CD8-positive, alpha-beta T cell (primary cell): ENCODE measurements at regions of chr6 and their contacts with region 1.

Region 1: GRCh38 chr6:27157459-27158315 is 89.8 kb upstream of the PRSS16 start:
- DNase-seq: peak; percentile 72 to 91 (median 86)
- ATAC-seq: peak; percentile 75
- H3K4me3 ChIP-seq: peak overlapping the region; percentile 55 to 60
- H3K4me3 Mint-ChIP-seq: peak overlapping the region; percentile 85
- H3K27ac ChIP-seq: peak overlapping the region; percentile 18 to 23
- H3K27ac Mint-ChIP-seq: peak overlapping the region; percentile 87
- H3K4me1 ChIP-seq: peaks cover 13% of the 10 kb centered on the region
- H3K4me1 Mint-ChIP-seq: peaks cover 38% of the 10 kb centered on the region
- H3K27me3 ChIP-seq: no peaks in the 10 kb centered on the region
- H3K27me3 Mint-ChIP-seq: no peaks in the 10 kb centered on the region
- CTCF ChIP-seq: peak; percentile 48

Region 2: GRCh38 chr6:27126815-27127537 is 30.7 kb before region 1 on chr6:
- CTCF ChIA-PET with region 1: interaction called, 49 read pairs
- POLR2A ChIA-PET with region 1: interaction called, 32 read pairs
- intact Hi-C with region 1: loop called (anchors 1 kb)
- DNase-seq: peak; percentile 62 to 94 (median 81)
- ATAC-seq: peak; percentile 75
- H3K4me3 ChIP-seq: peak overlapping the region; percentile 24 to 31
- H3K4me3 Mint-ChIP-seq: peak overlapping the region; percentile 71
- H3K27ac ChIP-seq: peak overlapping the region in 1 of 2 experiments; percentile 52
- H3K27ac Mint-ChIP-seq: peak overlapping the region; percentile 77
- H3K4me1 ChIP-seq: peaks cover 14% of the 10 kb centered on the region
- H3K4me1 Mint-ChIP-seq: peaks cover 16% of the 10 kb centered on the region
- H3K27me3 ChIP-seq: no peaks in the 10 kb centered on the region
- H3K27me3 Mint-ChIP-seq: no peaks in the 10 kb centered on the region
- CTCF ChIP-seq: peak; percentile 95

Region 3: DNA sequence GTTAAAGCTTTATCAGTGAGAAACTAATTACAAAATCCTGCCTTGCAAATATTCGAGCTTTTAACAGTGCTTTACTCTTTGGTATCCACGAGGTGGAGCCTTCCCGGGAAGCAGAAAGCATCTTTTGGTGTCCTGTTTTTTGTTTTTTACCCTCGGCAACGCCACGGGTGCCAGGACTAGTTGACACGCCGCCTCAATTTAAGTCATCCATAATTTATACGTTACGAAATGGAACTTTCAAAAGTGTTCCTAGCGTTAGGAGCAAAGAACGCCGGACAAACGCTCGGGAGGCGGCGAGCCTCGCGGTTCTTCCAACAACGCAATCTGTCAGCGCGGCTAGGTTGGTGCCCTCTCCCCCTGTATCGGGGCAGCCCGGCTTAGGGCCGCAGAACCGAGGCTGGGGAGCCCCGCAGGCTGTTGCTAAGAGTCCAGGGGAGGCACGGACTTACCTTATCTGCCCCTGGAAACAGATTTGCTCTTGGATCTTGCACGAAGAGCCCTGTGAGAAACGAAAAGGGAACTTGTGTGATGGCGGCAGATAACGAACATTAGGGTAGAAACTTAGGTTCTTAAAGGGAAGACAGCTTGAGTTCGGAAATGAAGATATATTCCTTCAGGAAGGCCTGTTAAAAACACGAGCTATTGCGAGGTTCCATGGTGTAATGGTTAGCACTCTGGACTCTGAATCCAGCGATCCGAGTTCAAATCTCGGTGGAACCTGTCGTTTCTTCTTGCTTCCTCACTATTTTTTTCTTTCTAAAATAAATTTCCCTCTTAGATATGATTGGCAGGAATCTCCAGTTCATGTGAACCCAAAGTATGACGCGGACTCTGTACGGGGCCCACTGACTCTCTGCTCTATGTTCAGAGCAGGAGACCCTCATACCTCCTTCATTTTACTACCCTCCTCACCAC is 361.5 kb after region 1 on chr6:
- CTCF ChIA-PET with region 1: interaction called, 6 read pairs
- POLR2A ChIA-PET with region 1: no interaction called
- intact Hi-C with region 1: loop called in 1 of 2 experiments (anchors 5 kb)
- DNase-seq: peak; percentile 29 to 88 (median 61)
- ATAC-seq: peak; percentile 78
- H3K4me3 ChIP-seq: peak overlapping the region; percentile 74 to 88
- H3K4me3 Mint-ChIP-seq: peak overlapping the region; percentile 83
- H3K27ac ChIP-seq: peak overlapping the region; percentile 59 to 72
- H3K27ac Mint-ChIP-seq: peak overlapping the region; percentile 83
- H3K4me1 ChIP-seq: peaks cover 10% of the 10 kb centered on the region
- H3K4me1 Mint-ChIP-seq: peaks cover 19% of the 10 kb centered on the region
- H3K27me3 ChIP-seq: peaks cover 0 to 9% of the 10 kb centered on the region in 2 experiments
- H3K27me3 Mint-ChIP-seq: peaks cover 18% of the 10 kb centered on the region
- CTCF ChIP-seq: peak; percentile 77

Region 4: GRCh38 chr6:28355743-28356665 is 1198.3 kb after region 1 on chr6:
- CTCF ChIA-PET with region 1: interaction called, 4 read pairs
- POLR2A ChIA-PET with region 1: no interaction called
- intact Hi-C with region 1: loop called (anchors 2 kb)
- DNase-seq: peak in 8 of 9 experiments; percentile 32 to 85 (median 62)
- ATAC-seq: peak; percentile 91
- H3K4me3 ChIP-seq: peak overlapping the region; percentile 39 to 65
- H3K4me3 Mint-ChIP-seq: peak overlapping the region; percentile 90
- H3K27ac ChIP-seq: peak overlapping the region in 1 of 2 experiments; percentile 27
- H3K27ac Mint-ChIP-seq: peak overlapping the region; percentile 52
- H3K4me1 ChIP-seq: peaks cover 17% of the 10 kb centered on the region
- H3K4me1 Mint-ChIP-seq: peaks cover 33% of the 10 kb centered on the region
- H3K27me3 ChIP-seq: no peaks in the 10 kb centered on the region
- H3K27me3 Mint-ChIP-seq: no peaks in the 10 kb centered on the region
- CTCF ChIP-seq: peak; percentile 83